Naive thymus-derived CD4-positive, alpha-beta T cell (primary cell): ENCODE measurements at regions of chr12 and their contacts with region 1.

Region 1: GRCh38 chr12:115916910-115917668 is 360.4 kb downstream of the MED13L start:
- DNase-seq: peak; percentile 32 to 77 (median 64)
- ATAC-seq: peak; percentile 85
- H3K4me3 ChIP-seq: no peak overlapping the region
- H3K4me3 Mint-ChIP-seq: peak overlapping the region in 7 of 10 donors; percentile 2 to 65 (median 16)
- H3K27ac ChIP-seq: no peak overlapping the region
- H3K27ac Mint-ChIP-seq: no peak overlapping the region
- H3K4me1 ChIP-seq: no peaks in the 10 kb centered on the region
- H3K4me1 Mint-ChIP-seq: peaks cover 0 to 5% (median 0%) of the 10 kb centered on the region in 7 donors
- H3K27me3 ChIP-seq: no peaks in the 10 kb centered on the region
- H3K27me3 Mint-ChIP-seq: peaks cover 49 to 67% (median 58%) of the 10 kb centered on the region in 5 donors

Region 2: GRCh38 chr12:113965951-113966797 is 1950.9 kb before region 1 on chr12 and contains the start of gene RBM19:
- CTCF ChIA-PET with region 1: no interaction called
- POLR2A ChIA-PET with region 1: interaction called, 3 read pairs
- intact Hi-C with region 1: loop called in 1 of 2 experiments (anchors 5 kb)
- DNase-seq: peak; percentile 94 to 98 (median 96)
- ATAC-seq: peak; percentile 99
- H3K4me3 ChIP-seq: peak within 1 kb of the TSS; percentile 88
- H3K4me3 Mint-ChIP-seq: peak within 1 kb of the TSS; percentile 94 to 100 (median 98)
- H3K27ac ChIP-seq: peak within 1 kb of the TSS; percentile 54
- H3K27ac Mint-ChIP-seq: peak within 1 kb of the TSS; percentile 92 to 98 (median 95)
- H3K4me1 ChIP-seq: peaks cover 5% of the 10 kb centered on the region in 2 donors
- H3K4me1 Mint-ChIP-seq: peaks cover 38 to 72% (median 53%) of the 10 kb centered on the region in 7 donors
- H3K27me3 ChIP-seq: no peaks in the 10 kb centered on the region
- H3K27me3 Mint-ChIP-seq: peaks cover 0 to 9% (median 0%) of the 10 kb centered on the region in 5 donors
- total RNA-seq, gene RBM19: 45.8 to 108 (median 67.3) TPM

Region 3: DNA sequence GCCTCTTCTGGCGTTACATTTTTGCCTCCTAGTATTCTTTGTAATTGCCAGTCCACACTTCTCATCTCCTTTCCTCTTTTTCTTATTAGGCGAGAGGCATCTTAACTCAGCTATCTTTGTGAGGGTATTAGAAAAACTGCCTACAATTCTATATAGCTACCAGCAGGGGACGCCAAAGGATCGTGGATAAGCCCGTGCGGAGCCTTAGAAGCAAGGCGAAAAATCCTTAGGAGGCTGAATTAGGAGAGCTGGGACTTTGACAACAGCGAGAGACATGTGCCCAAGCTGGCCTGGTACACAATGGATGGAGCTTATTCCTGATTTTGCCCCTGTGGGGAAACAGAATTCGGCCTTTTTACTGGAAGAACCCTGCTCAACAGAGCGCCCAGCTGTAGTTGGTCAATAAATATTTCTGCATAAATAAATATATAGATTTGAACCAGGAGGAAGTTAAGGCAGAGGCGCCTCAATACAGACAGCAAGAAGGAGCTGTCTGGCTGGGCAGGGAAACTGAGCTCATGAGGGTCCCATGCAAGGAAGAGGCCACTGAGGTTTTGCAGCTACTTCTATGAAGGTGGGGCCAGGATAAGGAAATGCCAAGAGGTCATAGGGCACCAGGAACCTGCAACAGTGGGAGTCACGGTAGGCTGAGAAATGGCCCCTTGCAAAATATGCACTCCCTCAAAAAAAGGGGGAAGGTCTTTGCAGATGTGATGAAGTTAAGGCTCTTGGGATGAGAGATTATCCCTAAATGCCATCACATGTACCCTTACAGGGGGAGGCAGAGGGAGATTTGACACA is 1936.4 kb before region 1 on chr12:
- CTCF ChIA-PET with region 1: interaction called, 7 read pairs
- POLR2A ChIA-PET with region 1: no interaction called
- intact Hi-C with region 1: loop called in 1 of 2 experiments (anchors 2 kb)
- DNase-seq: peak in 2 of 9 donors; percentile 18 to 38
- ATAC-seq: peak; percentile 67
- H3K4me3 ChIP-seq: no peak overlapping the region
- H3K4me3 Mint-ChIP-seq: no peak overlapping the region
- H3K27ac ChIP-seq: no peak overlapping the region
- H3K27ac Mint-ChIP-seq: no peak overlapping the region
- H3K4me1 ChIP-seq: no peaks in the 10 kb centered on the region
- H3K4me1 Mint-ChIP-seq: peaks cover 0 to 4% (median 0%) of the 10 kb centered on the region in 7 donors
- H3K27me3 ChIP-seq: peaks cover 0 to 5% of the 10 kb centered on the region in 2 donors
- H3K27me3 Mint-ChIP-seq: peaks cover 4 to 55% (median 36%) of the 10 kb centered on the region in 5 donors

Region 4: GRCh38 chr12:114508529-114509129 is 1408.5 kb before region 1 on chr12:
- CTCF ChIA-PET with region 1: no interaction called
- POLR2A ChIA-PET with region 1: no interaction called
- intact Hi-C with region 1: loop called in 1 of 2 experiments (anchors 5 kb)
- DNase-seq: peak; percentile 9 to 60 (median 48)
- ATAC-seq: peak; percentile 61
- H3K4me3 ChIP-seq: no peak overlapping the region
- H3K4me3 Mint-ChIP-seq: no peak overlapping the region
- H3K27ac ChIP-seq: no peak overlapping the region
- H3K27ac Mint-ChIP-seq: no peak overlapping the region
- H3K4me1 ChIP-seq: no peaks in the 10 kb centered on the region
- H3K4me1 Mint-ChIP-seq: peaks cover 0 to 3% (median 0%) of the 10 kb centered on the region in 7 donors
- H3K27me3 ChIP-seq: no peaks in the 10 kb centered on the region
- H3K27me3 Mint-ChIP-seq: peaks cover 7 to 26% (median 17%) of the 10 kb centered on the region in 5 donors

Region 5: GRCh38 chr12:114662512-114663177 is 1254.4 kb before region 1 on chr12:
- CTCF ChIA-PET with region 1: interaction called, 6 read pairs
- POLR2A ChIA-PET with region 1: no interaction called
- intact Hi-C with region 1: loop called in 1 of 2 experiments (anchors 1 kb)
- DNase-seq: peak; percentile 14 to 61 (median 38)
- ATAC-seq: peak; percentile 51
- H3K4me3 ChIP-seq: no peak overlapping the region
- H3K4me3 Mint-ChIP-seq: peak overlapping the region in 1 of 10 donors; percentile 32
- H3K27ac ChIP-seq: no peak overlapping the region
- H3K27ac Mint-ChIP-seq: no peak overlapping the region
- H3K4me1 ChIP-seq: no peaks in the 10 kb centered on the region
- H3K4me1 Mint-ChIP-seq: peaks cover 0 to 7% (median 2%) of the 10 kb centered on the region in 7 donors
- H3K27me3 ChIP-seq: no peaks in the 10 kb centered on the region
- H3K27me3 Mint-ChIP-seq: peaks cover 44 to 74% (median 48%) of the 10 kb centered on the region in 5 donors

Region 6: GRCh38 chr12:114952573-114953271 is 964.4 kb before region 1 on chr12:
- CTCF ChIA-PET with region 1: no interaction called
- POLR2A ChIA-PET with region 1: no interaction called
- intact Hi-C with region 1: no loop called
- DNase-seq: no peak
- ATAC-seq: no peak
- H3K4me3 ChIP-seq: no peak overlapping the region
- H3K4me3 Mint-ChIP-seq: no peak overlapping the region
- H3K27ac ChIP-seq: no peak overlapping the region
- H3K27ac Mint-ChIP-seq: no peak overlapping the region
- H3K4me1 ChIP-seq: no peaks in the 10 kb centered on the region
- H3K4me1 Mint-ChIP-seq: no peaks in the 10 kb centered on the region
- H3K27me3 ChIP-seq: no peaks in the 10 kb centered on the region
- H3K27me3 Mint-ChIP-seq: peaks cover 0 to 9% (median 3%) of the 10 kb centered on the region in 5 donors

Region 7: DNA sequence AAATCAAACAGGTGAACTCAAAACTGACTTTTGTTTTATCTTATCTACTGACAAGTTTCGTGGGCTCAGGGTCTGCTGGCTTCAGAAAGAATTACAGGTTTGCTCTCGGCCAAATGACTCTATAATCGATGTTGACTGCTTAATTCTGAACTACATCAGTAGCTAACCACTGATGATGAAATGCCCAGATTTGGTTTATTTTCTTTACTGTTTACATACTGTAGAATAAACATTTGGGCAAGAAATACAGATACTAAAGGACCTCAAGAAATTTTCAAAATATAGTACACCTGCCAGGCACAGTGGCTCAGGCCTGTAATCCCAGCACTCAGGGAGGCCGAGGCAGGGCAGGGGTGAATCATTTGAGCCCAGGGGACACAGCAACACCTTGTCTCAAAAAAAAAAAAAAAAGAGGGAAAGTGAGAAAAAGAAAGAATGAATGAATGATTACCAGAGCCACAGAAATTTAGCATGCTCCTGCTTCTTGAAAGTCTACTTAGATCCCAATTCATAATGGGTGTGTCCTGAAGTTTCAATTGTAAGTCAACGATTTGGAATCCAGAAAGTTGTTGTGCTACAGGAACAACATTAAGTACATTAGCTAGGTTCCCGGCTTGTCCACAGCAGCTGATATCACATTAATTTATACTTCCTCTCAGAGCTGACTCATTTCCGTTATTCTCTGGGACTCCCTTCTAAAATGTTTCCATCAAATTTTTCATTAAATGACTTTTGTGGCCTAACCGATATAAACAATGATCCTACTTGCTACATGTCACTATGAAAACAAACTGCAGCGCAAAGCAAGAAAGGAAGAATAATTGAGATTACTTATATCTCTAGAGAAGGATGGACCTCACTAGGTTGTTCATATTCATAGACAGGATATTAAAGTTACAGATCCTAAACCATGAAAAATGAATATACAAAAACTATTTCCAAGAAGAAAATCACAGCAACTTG is 226.1 kb after region 1 on chr12:
- CTCF ChIA-PET with region 1: no interaction called
- POLR2A ChIA-PET with region 1: no interaction called
- intact Hi-C with region 1: no loop called
- DNase-seq: no peak
- ATAC-seq: peak; percentile 63
- H3K4me3 ChIP-seq: no peak overlapping the region
- H3K4me3 Mint-ChIP-seq: peak overlapping the region in 7 of 10 donors; percentile 15 to 72 (median 51)
- H3K27ac ChIP-seq: no peak overlapping the region
- H3K27ac Mint-ChIP-seq: peak overlapping the region in 5 of 9 donors; percentile 1 to 45 (median 7)
- H3K4me1 ChIP-seq: peaks cover 11 to 21% of the 10 kb centered on the region in 2 donors
- H3K4me1 Mint-ChIP-seq: peaks cover 42 to 61% (median 52%) of the 10 kb centered on the region in 7 donors
- H3K27me3 ChIP-seq: no peaks in the 10 kb centered on the region
- H3K27me3 Mint-ChIP-seq: no peaks in the 10 kb centered on the region